ENCODE measurements at regions of chr11 and their contacts with region 1.

Region 1: DNA sequence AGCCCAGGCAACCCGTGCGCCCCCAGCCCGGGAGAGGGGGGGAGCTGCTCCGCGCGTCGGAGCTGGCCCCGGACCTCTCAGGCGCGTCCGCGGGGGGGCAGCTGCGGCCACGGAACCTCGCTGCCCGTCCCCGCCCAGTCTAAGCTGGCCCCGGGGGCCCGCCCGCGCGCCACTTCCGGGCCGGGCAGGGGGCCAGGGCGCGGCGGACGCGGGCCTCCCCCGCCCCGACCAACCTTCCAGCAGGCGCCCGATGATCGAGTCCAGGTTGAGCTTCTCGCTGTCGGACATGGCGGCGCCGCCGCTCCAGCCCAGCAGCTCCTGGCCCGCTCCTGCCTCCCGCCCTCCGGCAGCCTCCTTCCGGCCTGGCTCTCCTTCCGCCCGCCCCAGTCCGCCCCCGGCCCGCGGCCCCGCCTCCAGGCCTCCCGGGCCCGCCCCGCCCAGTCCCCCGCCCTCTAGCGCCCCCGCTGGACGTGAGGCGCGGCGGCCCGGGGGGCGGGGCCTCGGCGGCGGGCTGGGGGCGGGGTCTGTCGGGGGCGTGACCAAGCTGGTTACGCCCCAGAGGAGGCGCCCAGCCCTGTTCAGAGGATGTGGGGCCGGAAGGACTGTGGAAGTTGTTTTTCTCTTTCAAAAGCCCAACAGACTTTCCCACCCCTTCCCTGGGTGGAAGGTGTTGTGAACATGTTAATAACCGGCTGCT is at the start of gene PPP1CA:
- DNase-seq: peak; percentile 91
- ATAC-seq: peak; percentile 73
- H3K4me3 Mint-ChIP-seq: peak within 1 kb of the TSS; percentile 87
- H3K27ac Mint-ChIP-seq: peak within 1 kb of the TSS; percentile 86
- H3K4me1 Mint-ChIP-seq: peaks cover 40% of the 10 kb centered on the region
- H3K27me3 Mint-ChIP-seq: no peaks in the 10 kb centered on the region
- CTCF ChIP-seq: peak; percentile 46
- total RNA-seq, gene PPP1CA: 249 to 258 TPM

Region 2: GRCh38 chr11:67382276-67383136 is 19.1 kb before region 1 on chr11:
- CTCF ChIA-PET with region 1: interaction called, 17 read pairs
- POLR2A ChIA-PET with region 1: interaction called, 4 read pairs
- intact Hi-C with region 1: no loop called
- DNase-seq: peak; percentile 90
- ATAC-seq: peak; percentile 95
- H3K4me3 Mint-ChIP-seq: no peak overlapping the region
- H3K27ac Mint-ChIP-seq: no peak overlapping the region
- H3K4me1 Mint-ChIP-seq: peaks cover 2% of the 10 kb centered on the region
- H3K27me3 Mint-ChIP-seq: no peaks in the 10 kb centered on the region
- CTCF ChIP-seq: peak; percentile 94

Region 3: DNA sequence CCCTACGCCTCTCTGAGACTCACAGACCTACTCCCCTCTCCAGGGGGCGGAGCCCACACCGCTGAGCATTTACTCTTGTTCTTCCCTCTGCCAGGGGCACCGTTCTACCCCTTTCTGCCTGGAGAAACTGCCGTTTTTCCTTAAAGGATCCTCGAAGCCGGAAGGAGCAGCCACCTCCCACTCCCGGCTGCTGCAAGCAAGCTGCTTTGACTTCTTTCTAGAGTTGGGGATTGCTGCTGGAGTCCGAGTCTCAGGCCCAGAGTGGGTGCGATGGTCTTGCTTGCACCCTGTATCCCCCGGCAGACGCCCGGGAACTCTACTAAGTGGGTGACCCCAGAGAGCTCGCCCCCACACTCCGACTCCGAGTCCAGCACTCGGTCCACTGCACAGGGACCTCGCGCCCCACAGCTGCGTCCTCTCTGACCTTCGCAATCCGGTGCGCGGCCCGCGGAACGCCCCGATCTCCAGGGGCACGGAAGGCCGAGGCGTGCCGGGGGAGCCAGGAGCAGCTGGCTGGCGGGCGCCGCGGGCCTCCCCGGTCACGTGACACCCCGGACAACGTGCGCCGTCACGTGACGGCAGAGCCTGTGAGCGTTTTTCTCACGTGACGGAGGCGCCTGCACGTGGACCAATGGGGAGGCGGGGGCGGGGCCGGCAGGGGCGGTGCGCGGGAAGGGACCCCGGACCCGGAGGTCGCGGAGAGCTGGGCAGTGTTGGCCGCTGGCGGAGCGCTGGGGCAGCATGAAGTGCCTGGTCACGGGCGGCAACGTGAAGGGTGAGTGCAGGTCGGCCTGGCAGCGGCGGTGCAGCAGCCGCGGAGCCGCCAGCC is 10.1 kb before region 1 on chr11 and contains the start of gene RAD9A:
- CTCF ChIA-PET with region 1: interaction called, 18 read pairs
- POLR2A ChIA-PET with region 1: interaction called, 40 read pairs
- intact Hi-C with region 1: no loop called
- DNase-seq: peak; percentile 96
- ATAC-seq: peak; percentile 77
- H3K4me3 Mint-ChIP-seq: peak within 1 kb of the TSS; percentile 92
- H3K27ac Mint-ChIP-seq: peak within 1 kb of the TSS; percentile 77
- H3K4me1 Mint-ChIP-seq: peaks cover 30% of the 10 kb centered on the region
- H3K27me3 Mint-ChIP-seq: no peaks in the 10 kb centered on the region
- CTCF ChIP-seq: no peak
- total RNA-seq, gene RAD9A: 29.7 to 30.6 TPM

Region 4: DNA sequence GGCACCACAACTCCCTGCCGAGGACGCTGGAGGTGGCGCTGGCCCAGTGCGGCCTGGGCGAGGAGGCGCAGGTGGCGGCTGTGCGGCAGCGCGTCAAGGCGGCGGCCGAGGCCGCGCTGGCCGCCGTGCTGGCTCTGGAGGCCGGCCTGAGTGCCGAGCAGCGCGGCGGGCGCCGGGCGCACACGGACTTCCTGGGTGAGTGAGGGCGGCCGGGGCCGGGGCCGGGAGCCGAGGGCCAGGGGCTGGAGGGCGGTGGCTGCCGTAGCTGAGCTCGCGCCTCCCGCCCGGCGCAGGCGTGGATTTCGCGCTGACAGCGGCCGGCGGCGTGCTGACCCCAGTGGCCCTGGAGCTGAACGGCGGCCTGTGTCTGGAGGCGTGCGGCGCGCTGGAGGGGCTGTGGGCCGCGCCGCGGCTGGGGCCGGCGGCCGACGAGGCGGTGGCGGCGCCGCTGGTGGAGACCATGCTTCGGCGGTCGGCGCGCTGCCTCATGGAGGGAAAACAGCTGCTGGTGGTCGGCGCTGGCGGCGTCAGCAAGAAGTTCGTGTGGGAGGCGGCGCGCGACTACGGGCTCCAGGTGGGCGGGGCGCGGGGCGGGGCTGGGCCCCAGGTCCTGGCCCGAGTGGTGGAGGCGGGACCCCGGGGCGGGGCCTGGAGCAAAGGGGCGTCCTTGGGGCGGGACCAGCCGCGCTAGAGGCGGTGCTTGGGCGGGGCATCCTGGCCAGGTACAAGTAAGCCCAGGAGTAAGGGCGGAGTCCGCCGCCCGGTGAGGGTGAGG is 19.2 kb after region 1 on chr11:
- CTCF ChIA-PET with region 1: interaction called, 21 read pairs
- POLR2A ChIA-PET with region 1: interaction called, 93 read pairs
- intact Hi-C with region 1: no loop called
- DNase-seq: peak; percentile 99
- ATAC-seq: peak; percentile 91
- H3K4me3 Mint-ChIP-seq: peak overlapping the region; percentile 82
- H3K27ac Mint-ChIP-seq: peak overlapping the region; percentile 84
- H3K4me1 Mint-ChIP-seq: peaks cover 48% of the 10 kb centered on the region
- H3K27me3 Mint-ChIP-seq: no peaks in the 10 kb centered on the region
- CTCF ChIP-seq: no peak

Region 5: GRCh38 chr11:67456068-67456705 is 54.5 kb after region 1 on chr11:
- CTCF ChIA-PET with region 1: no interaction called
- POLR2A ChIA-PET with region 1: no interaction called
- intact Hi-C with region 1: no loop called
- DNase-seq: no peak
- ATAC-seq: no peak
- H3K4me3 Mint-ChIP-seq: no peak overlapping the region
- H3K27ac Mint-ChIP-seq: no peak overlapping the region
- H3K4me1 Mint-ChIP-seq: no peaks in the 10 kb centered on the region
- H3K27me3 Mint-ChIP-seq: no peaks in the 10 kb centered on the region
- CTCF ChIP-seq: no peak

Region 6: GRCh38 chr11:67468835-67469811 is 67.5 kb after region 1 on chr11 and contains the start of gene TMEM134:
- CTCF ChIA-PET with region 1: interaction called, 18 read pairs
- POLR2A ChIA-PET with region 1: interaction called, 7 read pairs
- intact Hi-C with region 1: no loop called
- DNase-seq: peak; percentile 94
- ATAC-seq: peak; percentile 86
- H3K4me3 Mint-ChIP-seq: peak within 1 kb of the TSS; percentile 95
- H3K27ac Mint-ChIP-seq: peak within 1 kb of the TSS; percentile 92
- H3K4me1 Mint-ChIP-seq: peaks cover 33% of the 10 kb centered on the region
- H3K27me3 Mint-ChIP-seq: no peaks in the 10 kb centered on the region
- CTCF ChIP-seq: peak; percentile 28
- total RNA-seq, gene TMEM134: 56.0 to 59.2 TPM

Region 7: GRCh38 chr11:67482825-67483798 is 81.5 kb after region 1 on chr11 and contains the start of gene AIP:
- CTCF ChIA-PET with region 1: interaction called, 7 read pairs
- POLR2A ChIA-PET with region 1: interaction called, 11 read pairs
- intact Hi-C with region 1: loop called (anchors 10 kb)
- DNase-seq: peak; percentile 99
- ATAC-seq: peak; percentile 68
- H3K4me3 Mint-ChIP-seq: peak within 1 kb of the TSS; percentile 79
- H3K27ac Mint-ChIP-seq: peak within 1 kb of the TSS; percentile 97
- H3K4me1 Mint-ChIP-seq: peaks cover 31% of the 10 kb centered on the region
- H3K27me3 Mint-ChIP-seq: no peaks in the 10 kb centered on the region
- CTCF ChIP-seq: no peak
- total RNA-seq, gene AIP: 145 to 146 TPM